Activated naive CD4-positive, alpha-beta T cell treated with anti-CD3 and anti-CD28 coated beads for 36 hours (primary cell): ENCODE measurements at regions of chr10 and their contacts with region 1.

Region 1: DNA sequence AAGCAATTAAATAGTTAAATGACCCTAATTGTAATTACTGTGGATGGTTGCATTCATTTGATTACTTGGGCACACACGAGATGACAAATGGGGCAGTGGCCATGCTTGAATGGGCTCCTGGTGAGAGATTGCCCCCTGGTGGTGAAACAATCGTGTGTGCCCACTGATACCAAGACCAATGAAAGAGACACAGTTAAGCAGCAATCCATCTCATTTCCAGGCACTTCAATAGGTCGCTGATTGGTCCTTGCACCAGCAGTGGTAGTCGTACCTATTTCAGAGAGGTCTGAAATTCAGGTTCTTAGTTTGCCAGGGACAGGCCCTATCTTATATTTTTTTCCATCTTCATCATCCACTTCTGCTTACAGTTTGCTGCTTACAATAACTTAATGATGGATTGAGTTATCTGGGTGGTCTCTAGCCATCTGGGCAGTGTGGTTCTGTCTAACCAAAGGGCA is 8.3 kb downstream of the PCBD1 start:
- DNase-seq: peak; percentile 91
- H3K4me3 Mint-ChIP-seq: no peak overlapping the region
- H3K27ac Mint-ChIP-seq: no peak overlapping the region
- H3K4me1 Mint-ChIP-seq: no peaks in the 10 kb centered on the region
- H3K27me3 Mint-ChIP-seq: no peaks in the 10 kb centered on the region

Region 2: GRCh38 chr10:70549962-70550458 is 330.1 kb before region 1 on chr10:
- CTCF ChIA-PET with region 1: interaction called, 4 read pairs
- intact Hi-C with region 1: loop called (anchors 1 kb)
- DNase-seq: peak; percentile 82
- H3K4me3 Mint-ChIP-seq: no peak overlapping the region
- H3K27ac Mint-ChIP-seq: no peak overlapping the region
- H3K4me1 Mint-ChIP-seq: no peaks in the 10 kb centered on the region
- H3K27me3 Mint-ChIP-seq: no peaks in the 10 kb centered on the region

Region 3: DNA sequence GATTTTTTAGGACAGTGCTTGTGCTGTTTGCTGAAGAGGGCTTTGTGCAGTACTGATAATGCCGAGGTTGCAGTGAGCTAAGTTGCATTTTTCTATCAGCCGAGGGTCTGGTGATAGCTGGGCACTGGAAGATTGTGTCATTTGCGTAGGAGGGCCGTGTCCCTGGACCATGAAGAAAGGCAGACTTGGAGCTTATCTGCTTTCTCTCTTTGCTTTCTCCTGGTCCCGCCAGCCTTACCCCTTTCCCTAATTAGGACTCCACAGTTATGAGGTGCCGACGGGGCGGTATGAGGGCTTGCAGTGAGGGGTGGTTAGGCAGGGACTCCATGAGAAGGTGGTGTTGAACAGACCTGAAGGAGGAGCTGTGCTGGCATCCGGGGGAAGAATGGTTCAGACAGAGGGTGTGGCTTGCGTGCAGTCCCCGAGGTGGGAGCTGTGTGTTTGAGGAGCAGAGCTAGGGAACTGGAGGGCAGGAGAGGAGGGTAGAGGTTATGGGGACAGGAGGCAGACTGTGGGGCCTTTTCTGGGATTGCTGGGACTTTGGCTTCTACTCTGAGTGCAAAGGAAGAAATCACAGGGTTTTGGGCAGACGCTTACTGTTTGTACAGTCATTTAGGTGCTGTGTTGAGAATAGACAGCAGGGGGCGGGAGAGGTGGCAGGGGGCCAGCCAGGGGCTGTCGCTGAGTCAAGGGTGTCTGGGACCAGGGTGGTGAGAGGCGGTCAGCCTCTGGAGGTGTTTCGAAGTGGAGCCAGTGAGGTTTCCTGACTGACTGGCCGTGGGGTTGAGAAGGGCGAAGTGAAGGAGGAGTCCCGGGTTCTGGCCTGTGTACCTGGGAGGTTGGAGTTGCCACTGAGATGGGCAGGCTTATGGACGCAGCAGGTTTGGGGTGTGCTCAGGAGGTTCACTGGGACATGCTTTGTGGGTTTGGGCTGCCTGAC is 321.0 kb before region 1 on chr10:
- CTCF ChIA-PET with region 1: no interaction called
- intact Hi-C with region 1: loop called (anchors 2 kb)
- DNase-seq: peak; percentile 81
- H3K4me3 Mint-ChIP-seq: peak overlapping the region; percentile 69
- H3K27ac Mint-ChIP-seq: no peak overlapping the region
- H3K4me1 Mint-ChIP-seq: peaks cover 11% of the 10 kb centered on the region
- H3K27me3 Mint-ChIP-seq: no peaks in the 10 kb centered on the region

Region 4: GRCh38 chr10:70758757-70759514 is 121.2 kb before region 1 on chr10:
- CTCF ChIA-PET with region 1: no interaction called
- intact Hi-C with region 1: loop called (anchors 5 kb)
- DNase-seq: peak; percentile 84
- H3K4me3 Mint-ChIP-seq: no peak overlapping the region
- H3K27ac Mint-ChIP-seq: no peak overlapping the region
- H3K4me1 Mint-ChIP-seq: peaks cover 7% of the 10 kb centered on the region
- H3K27me3 Mint-ChIP-seq: no peaks in the 10 kb centered on the region

Region 5: DNA sequence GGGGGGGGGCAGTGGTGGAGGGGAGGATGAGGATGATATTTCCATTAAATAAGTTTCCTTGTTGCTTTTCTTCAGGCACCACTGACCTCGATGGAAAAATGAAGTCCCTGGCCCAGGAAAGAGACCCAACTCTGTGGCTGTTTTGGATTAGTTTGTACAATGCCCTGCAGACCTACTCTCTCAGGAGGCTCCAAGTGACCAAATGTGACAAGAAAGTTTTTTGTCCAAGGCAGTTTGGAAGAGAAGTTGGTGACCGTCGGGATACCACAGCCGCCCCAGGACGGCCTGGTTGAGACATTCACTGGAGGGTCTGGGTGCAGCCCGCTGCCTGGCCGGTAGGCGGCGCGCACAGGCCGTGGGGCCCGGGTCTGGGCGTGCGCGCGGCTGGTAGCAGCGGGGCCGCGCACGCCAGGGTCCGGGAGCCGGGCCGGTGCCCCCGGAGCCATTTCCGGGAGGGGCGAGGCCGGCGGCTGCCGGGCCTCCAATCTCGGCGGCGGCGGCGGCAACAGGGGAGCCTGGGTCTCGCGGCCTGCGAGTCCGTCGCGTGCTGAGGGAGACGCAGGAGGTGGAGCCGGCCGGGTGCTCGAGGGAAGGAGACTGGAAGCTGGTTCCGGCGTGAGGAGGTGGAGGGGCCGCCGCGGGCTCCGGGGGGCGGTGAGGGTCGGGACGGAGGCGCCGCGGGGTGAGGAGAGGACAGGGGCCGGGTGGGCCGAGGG is 64.4 kb before region 1 on chr10 and contains the start of gene SGPL1:
- CTCF ChIA-PET with region 1: interaction called, 40 read pairs
- intact Hi-C with region 1: loop called (anchors 1 kb)
- DNase-seq: peak; percentile 86
- H3K4me3 Mint-ChIP-seq: peak within 1 kb of the TSS; percentile 82
- H3K27ac Mint-ChIP-seq: peak within 1 kb of the TSS; percentile 76
- H3K4me1 Mint-ChIP-seq: peaks cover 37% of the 10 kb centered on the region
- H3K27me3 Mint-ChIP-seq: no peaks in the 10 kb centered on the region
- total RNA-seq, gene SGPL1: 14.8 to 17.2 TPM

Region 6: GRCh38 chr10:70820976-70821755 is 58.9 kb before region 1 on chr10:
- CTCF ChIA-PET with region 1: interaction called, 40 read pairs
- intact Hi-C with region 1: no loop called
- DNase-seq: peak; percentile 41
- H3K4me3 Mint-ChIP-seq: no peak overlapping the region
- H3K27ac Mint-ChIP-seq: peak overlapping the region; percentile 61
- H3K4me1 Mint-ChIP-seq: peaks cover 51% of the 10 kb centered on the region
- H3K27me3 Mint-ChIP-seq: no peaks in the 10 kb centered on the region